ENCODE measurements at regions of chr20 and their contacts with region 1.

Region 1: GRCh38 chr20:32040142-32041022 is 11.7 kb upstream of the HCK start:
- DNase-seq: no peak
- H3K4me3 ChIP-seq: no peak overlapping the region
- H3K27ac ChIP-seq: no peak overlapping the region
- H3K4me1 ChIP-seq: no peaks in the 10 kb centered on the region
- H3K27me3 ChIP-seq: no peaks in the 10 kb centered on the region
- CTCF ChIP-seq: no peak
- POLR2A ChIP-seq: no peak

Region 2: DNA sequence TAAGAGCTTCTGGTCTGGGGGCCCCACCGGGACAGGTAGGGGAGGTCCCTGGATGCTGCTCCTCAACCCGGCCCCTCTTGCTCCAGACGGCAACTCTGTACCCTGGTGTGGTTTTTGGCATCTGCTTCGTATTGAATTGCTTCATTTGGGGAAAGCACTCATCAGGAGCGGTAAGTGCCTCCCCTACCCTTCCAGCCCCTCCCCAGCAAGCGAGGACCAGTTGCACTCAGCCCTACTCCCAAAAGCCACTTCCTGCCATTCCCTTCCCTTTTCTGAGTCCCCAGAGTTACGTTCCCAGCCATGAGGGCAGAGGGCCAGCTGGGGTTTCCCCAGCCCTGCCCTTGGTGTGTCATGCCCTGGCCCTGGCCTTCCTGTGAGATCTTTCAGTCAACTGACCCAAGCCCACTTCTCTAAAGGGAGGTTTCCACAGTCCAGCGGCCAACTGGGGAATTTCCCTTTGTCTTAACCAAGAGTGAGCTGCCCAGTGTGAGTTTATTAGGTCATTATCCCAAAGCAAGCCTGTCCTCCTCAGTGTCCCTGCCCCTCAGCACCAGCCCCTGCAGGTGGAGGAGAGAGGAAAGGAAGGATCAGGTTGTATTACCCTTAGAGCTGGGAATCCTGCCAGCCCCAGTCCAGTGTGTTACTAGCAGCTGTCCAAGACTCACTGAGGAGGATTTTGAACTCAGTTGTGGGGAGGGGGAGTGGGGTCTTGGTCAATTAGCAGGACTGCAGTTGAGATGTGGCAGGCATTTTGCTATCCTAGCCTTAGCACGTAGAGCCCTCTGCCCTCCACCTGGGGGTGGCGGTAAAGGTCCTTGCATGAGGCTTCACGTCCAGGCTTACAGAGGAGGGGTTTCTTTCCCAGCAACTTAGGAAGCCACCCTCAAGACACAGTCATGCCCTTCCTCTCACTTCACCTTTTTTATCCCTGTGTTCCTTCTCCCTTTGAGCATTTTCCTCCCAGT is 114.9 kb after region 1 on chr20:
- intact Hi-C with region 1: no loop called
- DNase-seq: peak in 1 of 2 donors; percentile 92
- H3K4me3 ChIP-seq: no peak overlapping the region
- H3K27ac ChIP-seq: no peak overlapping the region
- H3K4me1 ChIP-seq: peaks cover 12% of the 10 kb centered on the region
- H3K27me3 ChIP-seq: no peaks in the 10 kb centered on the region
- CTCF ChIP-seq: no peak
- POLR2A ChIP-seq: no peak

Region 3: DNA sequence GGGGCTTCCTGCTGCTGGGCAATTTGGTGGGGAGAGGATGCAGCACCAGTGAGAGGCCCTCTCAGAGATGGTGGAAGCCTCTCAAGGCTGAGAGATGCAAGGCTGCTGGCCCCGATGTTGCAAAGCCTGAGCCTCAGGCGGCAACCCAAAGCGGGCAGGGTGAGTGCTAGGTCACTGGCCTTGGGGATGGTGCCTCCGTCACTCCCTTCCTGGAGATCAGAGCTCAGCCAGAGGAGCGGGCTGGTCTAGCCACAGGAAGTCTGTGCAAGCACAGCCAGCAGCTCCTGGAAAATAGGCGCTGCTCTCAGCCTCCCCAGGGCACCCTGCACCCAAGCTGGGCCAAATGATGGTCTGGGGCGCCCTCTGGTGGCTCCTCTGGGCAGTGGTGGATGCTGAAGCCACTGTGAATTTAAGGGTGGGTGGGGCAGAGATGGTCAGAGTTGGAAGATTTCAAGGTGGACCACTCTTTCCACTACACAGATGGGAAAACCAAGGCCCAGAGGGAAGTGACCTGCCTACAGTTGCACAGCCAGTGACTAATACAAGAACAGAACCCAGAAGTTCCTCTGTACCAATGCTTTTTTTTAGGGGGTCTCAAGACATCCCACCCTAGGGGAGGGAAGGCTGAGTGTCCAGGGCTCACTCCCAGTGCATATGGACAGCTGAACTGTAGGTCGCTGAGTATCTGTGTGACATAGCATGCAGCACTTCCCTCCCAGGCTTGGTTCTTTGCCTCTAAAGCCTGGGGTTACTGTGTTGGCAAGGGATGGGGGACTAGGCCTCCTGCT is 612.6 kb after region 1 on chr20:
- intact Hi-C with region 1: loop called (anchors 5 kb)
- DNase-seq: no peak
- H3K4me3 ChIP-seq: no peak overlapping the region
- H3K27ac ChIP-seq: no peak overlapping the region
- H3K4me1 ChIP-seq: no peaks in the 10 kb centered on the region
- H3K27me3 ChIP-seq: no peaks in the 10 kb centered on the region
- CTCF ChIP-seq: peak; percentile 94 to 97 (median 96)
- POLR2A ChIP-seq: no peak

Region 4: GRCh38 chr20:33803921-33804337 is 1763.5 kb after region 1 on chr20:
- intact Hi-C with region 1: no loop called
- DNase-seq: no peak
- H3K4me3 ChIP-seq: no peak overlapping the region
- H3K27ac ChIP-seq: no peak overlapping the region
- H3K4me1 ChIP-seq: no peaks in the 10 kb centered on the region
- H3K27me3 ChIP-seq: no peaks in the 10 kb centered on the region
- CTCF ChIP-seq: no peak
- POLR2A ChIP-seq: no peak